ENCODE measurements at regions of chr19 and their contacts with region 1.

Region 1: DNA sequence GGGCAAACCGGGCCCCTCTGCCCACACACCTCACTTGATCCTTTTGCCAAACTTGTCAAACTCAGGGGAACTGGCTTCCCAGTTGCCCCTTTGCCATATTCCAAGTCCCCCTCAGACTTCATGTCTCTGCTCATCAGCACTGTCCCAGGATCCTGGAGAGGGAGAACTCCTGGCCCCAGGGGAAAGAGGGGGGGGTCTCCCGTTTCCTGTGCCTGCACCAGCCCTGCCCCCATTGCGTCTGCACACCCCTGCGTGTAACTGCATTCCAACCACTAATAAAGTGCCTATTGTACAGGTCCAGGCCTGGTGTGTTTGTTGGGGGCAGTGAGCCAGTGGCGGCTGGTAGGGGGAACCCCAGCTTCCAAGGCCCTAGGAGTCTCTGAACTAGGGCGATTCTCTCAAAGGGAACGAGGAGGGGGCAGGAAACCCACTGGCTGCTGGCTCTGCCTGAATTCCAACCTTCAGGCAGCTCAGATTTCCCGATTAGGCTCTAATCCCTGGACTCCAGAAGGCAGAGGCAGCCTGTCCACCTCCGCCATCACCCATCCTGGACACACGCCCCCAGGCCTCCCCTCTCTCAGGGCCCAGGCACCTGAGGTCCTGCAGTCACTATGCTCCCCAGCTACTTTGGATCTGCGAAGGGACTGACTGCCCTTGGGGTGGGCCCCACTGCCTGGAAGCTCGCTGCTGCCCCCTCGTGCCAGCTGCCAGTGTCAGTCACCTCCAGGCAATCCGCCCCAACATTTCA is 9.7 kb upstream of the ILF3 start:
- DNase-seq: no peak
- ATAC-seq: peak; percentile 91
- H3K4me3 ChIP-seq: no peak overlapping the region
- H3K27ac ChIP-seq: no peak overlapping the region
- H3K4me1 ChIP-seq: peaks cover 2% of the 10 kb centered on the region
- H3K27me3 ChIP-seq: no peaks in the 10 kb centered on the region
- CTCF ChIP-seq: peak; percentile 91 to 95 (median 93)
- EP300 ChIP-seq: no peak
- POLR2A ChIP-seq: no peak
- RAD21 ChIP-seq: peak; percentile 89

Region 2: GRCh38 chr19:10478903-10479384 is 165.5 kb before region 1 on chr19:
- CTCF ChIA-PET with region 1: interaction called, 6 read pairs
- POLR2A ChIA-PET with region 1: no interaction called
- RAD21 ChIA-PET with region 1: interaction called, 11 read pairs
- SMC1A ChIA-PET with region 1: interaction called, 3 read pairs
- in situ Hi-C with region 1: no loop called
- intact Hi-C with region 1: no loop called
- DNase-seq: no peak
- ATAC-seq: peak; percentile 70
- H3K4me3 ChIP-seq: no peak overlapping the region
- H3K27ac ChIP-seq: no peak overlapping the region
- H3K4me1 ChIP-seq: no peaks in the 10 kb centered on the region
- H3K27me3 ChIP-seq: no peaks in the 10 kb centered on the region; a peak in 1 of 4 replicates
- CTCF ChIP-seq: peak; percentile 16 to 56 (median 27); a peak in 5 of 6 replicates
- EP300 ChIP-seq: no peak
- POLR2A ChIP-seq: no peak
- RAD21 ChIP-seq: peak; percentile 10; the same call in 1 of the 2 replicates

Region 3: DNA sequence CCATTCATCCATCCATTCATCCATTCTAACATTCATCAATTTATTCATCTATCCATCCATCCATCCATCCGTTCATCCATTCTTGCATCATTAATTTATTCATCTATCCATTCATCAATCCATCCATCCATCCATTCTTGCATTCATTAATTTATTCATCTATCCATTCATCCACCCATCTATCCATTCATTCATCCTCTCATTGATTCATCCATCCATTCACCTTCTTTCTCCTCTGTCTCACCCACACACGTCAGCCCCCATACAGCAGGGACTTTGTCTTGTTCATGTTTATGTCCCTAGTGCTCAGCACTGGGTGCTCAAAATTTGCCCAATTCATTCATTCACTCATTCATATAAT is 56.7 kb before region 1 on chr19:
- CTCF ChIA-PET with region 1: interaction called, 397 read pairs
- POLR2A ChIA-PET with region 1: interaction called, 24 read pairs
- RAD21 ChIA-PET with region 1: interaction called, 250 read pairs
- SMC1A ChIA-PET with region 1: interaction called, 252 read pairs
- in situ Hi-C with region 1: loop called (anchors 5 kb)
- intact Hi-C with region 1: no loop called
- DNase-seq: no peak
- ATAC-seq: no peak
- H3K4me3 ChIP-seq: no peak overlapping the region
- H3K27ac ChIP-seq: no peak overlapping the region
- H3K4me1 ChIP-seq: no peaks in the 10 kb centered on the region
- H3K27me3 ChIP-seq: no peaks in the 10 kb centered on the region; a peak in 1 of 4 replicates
- CTCF ChIP-seq: no peak
- EP300 ChIP-seq: no peak
- POLR2A ChIP-seq: no peak
- RAD21 ChIP-seq: no peak

Region 4: GRCh38 chr19:10593820-10594637 is 50.4 kb before region 1 on chr19:
- CTCF ChIA-PET with region 1: interaction called, 38 read pairs
- POLR2A ChIA-PET with region 1: interaction called, 6 read pairs
- RAD21 ChIA-PET with region 1: interaction called, 7 read pairs
- SMC1A ChIA-PET with region 1: interaction called, 21 read pairs
- in situ Hi-C with region 1: no loop called
- intact Hi-C with region 1: no loop called
- DNase-seq: peak; percentile 72
- ATAC-seq: peak; percentile 84
- H3K4me3 ChIP-seq: no peak overlapping the region
- H3K27ac ChIP-seq: no peak overlapping the region
- H3K4me1 ChIP-seq: peaks cover 33% of the 10 kb centered on the region
- H3K27me3 ChIP-seq: no peaks in the 10 kb centered on the region
- CTCF ChIP-seq: no peak
- EP300 ChIP-seq: peak; percentile 38 to 41; a peak in 1 of 4 replicates
- POLR2A ChIP-seq: no peak
- RAD21 ChIP-seq: no peak

Region 5: DNA sequence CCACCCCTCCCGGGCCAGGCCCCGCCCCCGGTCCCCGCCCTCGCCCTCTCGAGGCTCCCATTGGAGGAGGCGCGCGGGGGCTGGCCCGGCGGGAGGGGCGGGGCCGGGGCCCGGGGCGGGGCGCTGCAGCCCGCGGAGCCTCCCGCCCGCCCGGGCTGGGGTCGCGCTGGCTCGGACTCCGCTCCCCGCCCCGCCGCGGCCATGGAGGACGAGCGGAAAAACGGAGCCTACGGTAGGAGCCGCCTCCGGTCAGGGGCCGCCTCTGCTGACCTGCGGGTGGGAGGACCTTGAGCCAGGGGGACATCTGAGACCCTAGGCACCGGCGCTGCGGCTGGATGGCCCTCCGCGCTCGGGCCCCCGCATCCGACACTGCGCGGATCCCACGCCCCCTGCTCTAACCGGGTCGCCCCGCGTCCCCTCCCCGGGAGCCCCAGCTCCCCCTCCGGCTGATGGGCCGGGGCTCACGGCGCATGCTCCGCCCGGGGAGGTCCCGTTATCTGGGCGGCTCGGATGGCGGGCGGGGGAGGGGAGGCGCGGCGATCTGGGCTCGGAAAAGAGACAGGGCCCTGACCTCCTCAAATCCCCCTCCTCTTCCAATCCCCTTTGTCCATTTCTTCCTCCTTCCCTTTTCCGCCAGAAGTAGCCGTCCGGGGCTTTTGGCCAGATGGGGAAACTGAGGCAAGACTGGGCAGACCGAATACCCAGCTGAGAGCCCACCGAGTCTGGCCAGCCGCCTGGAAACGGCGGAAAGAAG is 41.9 kb before region 1 on chr19:
- CTCF ChIA-PET with region 1: interaction called, 43 read pairs
- POLR2A ChIA-PET with region 1: interaction called, 15 read pairs
- RAD21 ChIA-PET with region 1: interaction called, 34 read pairs
- SMC1A ChIA-PET with region 1: interaction called, 28 read pairs
- in situ Hi-C with region 1: no loop called
- intact Hi-C with region 1: loop called (anchors 5 kb)
- DNase-seq: no peak
- ATAC-seq: peak; percentile 81
- H3K4me3 ChIP-seq: peak overlapping the region; percentile 98
- H3K27ac ChIP-seq: peak overlapping the region; percentile 98
- H3K4me1 ChIP-seq: peaks cover 20% of the 10 kb centered on the region
- H3K27me3 ChIP-seq: no peaks in the 10 kb centered on the region
- CTCF ChIP-seq: no peak
- EP300 ChIP-seq: no peak
- POLR2A ChIP-seq: peak; percentile 73
- RAD21 ChIP-seq: no peak

Region 6: DNA sequence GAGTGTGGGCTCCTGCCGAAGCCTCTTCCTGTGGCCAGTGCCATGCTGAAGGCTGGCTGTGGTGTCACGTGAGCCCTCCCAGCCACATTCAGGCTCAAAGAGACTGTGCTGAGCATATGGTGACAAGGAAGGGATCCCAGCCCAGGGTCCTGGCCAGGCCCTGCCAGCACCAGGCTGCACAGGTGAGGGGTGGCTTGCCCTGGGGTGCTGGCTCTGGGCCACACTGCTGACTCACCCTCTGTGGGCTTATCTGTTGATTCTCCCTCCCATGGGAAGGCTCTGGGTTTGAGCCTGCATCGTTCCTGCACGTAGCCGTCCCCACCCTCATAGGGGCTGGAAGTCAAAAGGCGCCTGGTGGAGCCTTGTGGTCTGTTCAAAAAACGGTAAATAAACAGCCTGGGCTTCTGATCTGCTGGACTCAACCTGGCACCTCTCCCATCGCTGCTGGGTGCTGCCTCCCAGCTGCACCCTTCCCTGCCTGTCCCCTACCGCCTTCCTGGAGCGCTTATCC is 104.5 kb after region 1 on chr19:
- CTCF ChIA-PET with region 1: no interaction called
- POLR2A ChIA-PET with region 1: no interaction called
- RAD21 ChIA-PET with region 1: no interaction called
- SMC1A ChIA-PET with region 1: no interaction called
- in situ Hi-C with region 1: no loop called
- intact Hi-C with region 1: no loop called
- DNase-seq: no peak
- ATAC-seq: no peak
- H3K4me3 ChIP-seq: no peak overlapping the region
- H3K27ac ChIP-seq: no peak overlapping the region
- H3K4me1 ChIP-seq: no peaks in the 10 kb centered on the region
- H3K27me3 ChIP-seq: no peaks in the 10 kb centered on the region
- CTCF ChIP-seq: no peak
- EP300 ChIP-seq: no peak
- POLR2A ChIP-seq: no peak
- RAD21 ChIP-seq: no peak

Region 7: DNA sequence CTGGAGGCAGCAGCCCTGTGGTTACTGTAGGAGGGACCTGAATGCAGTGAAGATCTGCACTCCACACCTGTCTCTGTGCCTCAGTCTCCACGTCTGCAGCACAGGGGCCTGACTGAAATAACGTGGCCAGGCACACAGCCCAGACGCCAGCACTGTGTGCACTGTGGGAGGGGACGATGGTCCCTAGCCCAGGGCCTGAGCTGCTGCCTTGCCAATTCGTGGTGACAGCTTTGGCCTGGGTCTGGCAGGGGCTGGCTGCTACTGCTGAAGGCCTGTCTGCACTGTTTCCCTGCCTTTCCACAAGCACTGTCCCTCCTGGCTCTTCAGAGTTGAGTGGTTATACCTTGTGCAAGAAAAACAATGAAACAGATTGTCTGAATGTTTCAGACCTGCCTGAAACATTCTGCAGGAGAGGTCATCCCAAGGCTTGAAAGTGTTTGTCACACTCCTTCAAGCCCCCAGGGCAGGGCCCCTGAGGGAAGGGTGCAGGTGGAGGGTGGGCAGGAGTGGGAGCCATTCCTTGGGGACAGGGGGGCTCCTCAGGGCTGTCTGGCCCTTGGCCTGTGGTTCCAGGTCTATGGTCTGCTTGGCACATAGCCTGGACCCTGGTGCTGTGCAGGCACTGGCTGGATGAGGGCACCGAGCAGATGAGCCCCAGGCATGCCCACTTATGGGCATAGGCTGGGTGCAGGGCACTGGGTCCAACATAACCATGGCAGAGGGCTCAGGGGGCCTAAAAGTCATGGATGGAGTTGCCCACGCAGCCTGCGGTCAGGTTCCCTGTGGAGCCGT is 406.1 kb after region 1 on chr19:
- CTCF ChIA-PET with region 1: no interaction called
- POLR2A ChIA-PET with region 1: no interaction called
- RAD21 ChIA-PET with region 1: no interaction called
- SMC1A ChIA-PET with region 1: no interaction called
- in situ Hi-C with region 1: no loop called
- intact Hi-C with region 1: no loop called
- DNase-seq: no peak
- ATAC-seq: no peak
- H3K4me3 ChIP-seq: no peak overlapping the region
- H3K27ac ChIP-seq: peak overlapping the region; percentile 71
- H3K4me1 ChIP-seq: peaks cover 58% of the 10 kb centered on the region
- H3K27me3 ChIP-seq: no peaks in the 10 kb centered on the region
- CTCF ChIP-seq: no peak
- EP300 ChIP-seq: no peak
- POLR2A ChIP-seq: no peak
- RAD21 ChIP-seq: no peak